ENCODE measurements at regions of chr1 and their contacts with region 1.

Region 1: DNA sequence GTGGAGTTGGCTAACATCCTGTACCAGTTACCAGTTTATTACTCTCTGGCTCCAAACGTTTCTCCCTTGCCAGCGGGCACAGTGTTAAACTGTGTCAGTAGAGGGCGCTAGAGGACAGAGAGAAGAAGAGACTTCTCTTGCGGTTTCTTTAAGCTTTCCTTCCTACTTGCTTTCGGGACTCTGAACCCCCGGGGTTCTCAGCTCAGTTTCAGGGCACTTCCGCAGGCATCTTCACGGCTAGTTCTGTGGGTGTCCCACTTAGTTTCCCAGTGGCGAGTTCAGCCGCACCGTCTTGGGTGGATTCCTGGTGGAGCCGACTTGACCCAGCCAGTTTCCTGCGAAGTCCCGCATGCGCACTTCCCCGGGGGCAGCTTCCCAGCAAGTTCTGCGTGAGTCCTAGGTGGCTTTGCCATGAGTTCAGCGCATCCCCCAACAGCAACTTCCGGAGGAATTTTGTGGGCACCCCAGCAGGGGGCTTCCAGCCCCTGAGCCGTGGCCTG is 37.9 kb upstream of the BTG2 start:
- DNase-seq: peak; percentile 90
- ATAC-seq: peak; percentile 66
- H3K4me3 Mint-ChIP-seq: peak overlapping the region; percentile 82
- H3K27ac Mint-ChIP-seq: peak overlapping the region; percentile 72
- H3K4me1 Mint-ChIP-seq: peaks cover 32% of the 10 kb centered on the region
- H3K27me3 Mint-ChIP-seq: no peaks in the 10 kb centered on the region

Region 2: DNA sequence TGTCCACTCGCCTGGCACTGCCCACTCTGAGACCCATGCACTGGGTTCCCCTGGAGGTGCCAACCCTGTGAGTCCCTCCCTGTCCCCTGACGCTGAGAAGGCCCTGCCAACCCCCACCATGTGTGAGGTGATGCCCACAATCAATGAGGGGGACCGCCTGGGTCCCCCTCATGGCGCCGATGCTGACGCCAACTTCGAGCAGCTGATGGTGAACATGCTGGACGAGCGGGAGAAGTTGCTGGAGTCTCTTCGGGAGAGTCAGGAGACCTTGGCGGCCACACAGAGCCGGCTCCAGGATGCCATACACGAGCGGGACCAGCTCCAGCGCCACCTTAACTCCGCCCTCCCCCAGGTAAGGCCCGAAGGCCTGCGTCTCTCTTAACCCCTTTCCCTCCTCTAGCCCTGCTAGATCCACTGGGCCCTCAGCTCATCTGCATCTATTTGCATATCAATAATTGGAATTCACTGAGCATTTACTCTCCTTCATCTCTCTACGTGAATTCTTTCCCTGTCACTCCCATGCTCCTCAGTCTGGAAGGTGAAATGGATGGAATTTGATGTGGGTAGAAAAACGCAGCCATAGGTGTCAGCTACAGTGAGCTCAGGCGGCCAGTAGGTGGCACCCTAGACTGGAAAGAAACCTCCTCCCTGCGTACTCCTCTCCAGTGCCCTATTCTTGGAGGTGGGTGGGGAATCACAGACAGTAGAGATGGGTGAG is 228.3 kb before region 1 on chr1:
- CTCF ChIA-PET with region 1: interaction called, 39 read pairs
- POLR2A ChIA-PET with region 1: no interaction called
- DNase-seq: peak; percentile 77
- ATAC-seq: peak; percentile 80
- H3K4me3 Mint-ChIP-seq: no peak overlapping the region
- H3K27ac Mint-ChIP-seq: no peak overlapping the region
- H3K4me1 Mint-ChIP-seq: peaks cover 10% of the 10 kb centered on the region
- H3K27me3 Mint-ChIP-seq: no peaks in the 10 kb centered on the region

Region 3: GRCh38 chr1:203252678-203253077 is 14.7 kb before region 1 on chr1:
- CTCF ChIA-PET with region 1: interaction called, 18 read pairs
- POLR2A ChIA-PET with region 1: no interaction called
- DNase-seq: no peak
- ATAC-seq: no peak
- H3K4me3 Mint-ChIP-seq: no peak overlapping the region
- H3K27ac Mint-ChIP-seq: no peak overlapping the region
- H3K4me1 Mint-ChIP-seq: no peaks in the 10 kb centered on the region
- H3K27me3 Mint-ChIP-seq: peaks cover 44% of the 10 kb centered on the region

Region 4: GRCh38 chr1:203299169-203299568 is 31.8 kb after region 1 on chr1:
- CTCF ChIA-PET with region 1: interaction called, 461 read pairs
- POLR2A ChIA-PET with region 1: interaction called, 4 read pairs
- DNase-seq: no peak
- ATAC-seq: peak; percentile 35
- H3K4me3 Mint-ChIP-seq: no peak overlapping the region
- H3K27ac Mint-ChIP-seq: no peak overlapping the region
- H3K4me1 Mint-ChIP-seq: peaks cover 66% of the 10 kb centered on the region
- H3K27me3 Mint-ChIP-seq: no peaks in the 10 kb centered on the region

Region 5: DNA sequence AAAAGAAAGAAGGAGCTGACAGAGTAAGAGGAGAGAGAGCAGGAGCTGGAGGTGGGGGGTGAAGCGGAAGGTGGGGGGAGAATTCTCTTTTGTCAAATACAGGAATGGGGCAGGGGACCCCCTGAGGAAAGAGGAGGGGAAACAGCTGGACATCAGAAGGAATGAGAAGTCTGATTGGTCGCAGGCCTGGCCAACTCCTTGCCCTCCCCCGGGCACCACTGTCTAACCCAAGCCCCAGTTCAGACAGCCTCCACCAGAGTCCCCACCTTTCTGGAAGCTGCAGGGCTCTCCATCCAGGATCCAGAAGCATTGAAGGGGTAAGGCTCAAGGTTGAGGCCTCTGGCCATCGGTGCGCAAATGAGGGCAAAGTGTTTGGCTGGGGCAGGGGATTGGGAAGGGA is 226.5 kb after region 1 on chr1 and contains the start of gene OPTC:
- CTCF ChIA-PET with region 1: interaction called, 204 read pairs
- POLR2A ChIA-PET with region 1: no interaction called
- DNase-seq: no peak
- ATAC-seq: no peak
- H3K4me3 Mint-ChIP-seq: no peak within 1 kb of the TSS
- H3K27ac Mint-ChIP-seq: no peak within 1 kb of the TSS
- H3K4me1 Mint-ChIP-seq: no peaks in the 10 kb centered on the region
- H3K27me3 Mint-ChIP-seq: peaks cover 6% of the 10 kb centered on the region
- total RNA-seq, gene OPTC: not detected

Region 6: GRCh38 chr1:203649999-203650855 is 382.8 kb after region 1 on chr1:
- CTCF ChIA-PET with region 1: interaction called, 10 read pairs
- POLR2A ChIA-PET with region 1: no interaction called
- DNase-seq: peak; percentile 70
- ATAC-seq: peak; percentile 76
- H3K4me3 Mint-ChIP-seq: peak overlapping the region; percentile 63
- H3K27ac Mint-ChIP-seq: peak overlapping the region; percentile 76
- H3K4me1 Mint-ChIP-seq: peaks cover 77% of the 10 kb centered on the region
- H3K27me3 Mint-ChIP-seq: no peaks in the 10 kb centered on the region